ENCODE measurements at regions of chr2 and their contacts with region 1.

Region 1: DNA sequence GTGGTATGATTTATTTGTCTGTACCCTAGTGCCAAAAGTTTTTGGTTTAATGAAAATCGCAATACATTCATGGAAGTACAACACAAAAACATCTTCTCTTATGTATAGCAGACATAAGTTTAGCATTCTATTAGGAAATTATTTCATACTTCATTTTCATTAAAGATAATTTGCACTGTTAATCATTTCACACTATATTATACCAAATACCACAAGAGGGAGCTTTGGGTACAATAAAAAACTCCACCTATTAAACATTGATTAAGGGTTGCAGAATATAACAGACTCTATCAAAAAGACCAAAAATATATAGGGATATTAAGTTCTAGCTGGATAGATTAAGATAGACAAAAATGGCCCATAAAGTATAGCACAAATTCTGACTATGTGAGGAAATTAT is 79.0 kb downstream of the SLC66A3 start:
- DNase-seq: peak; percentile 46
- H3K4me3 ChIP-seq: no peak overlapping the region
- H3K27ac ChIP-seq: no peak overlapping the region
- H3K4me1 ChIP-seq: no peaks in the 10 kb centered on the region
- H3K27me3 ChIP-seq: no peaks in the 10 kb centered on the region
- CTCF ChIP-seq: peak; percentile 17 to 21
- POLR2A ChIP-seq: no peak

Region 2: GRCh38 chr2:10434886-10435819 is 799.2 kb before region 1 on chr2:
- CTCF ChIA-PET with region 1: no interaction called
- POLR2A ChIA-PET with region 1: no interaction called
- dilution Hi-C with region 1: no loop called
- intact Hi-C with region 1: no loop called
- DNase-seq: peak; percentile 74
- H3K4me3 ChIP-seq: no peak overlapping the region
- H3K27ac ChIP-seq: no peak overlapping the region
- H3K4me1 ChIP-seq: no peaks in the 10 kb centered on the region
- H3K27me3 ChIP-seq: no peaks in the 10 kb centered on the region
- CTCF ChIP-seq: peak; percentile 96
- POLR2A ChIP-seq: no peak

Region 3: GRCh38 chr2:11071211-11071865 is 163.0 kb before region 1 on chr2:
- CTCF ChIA-PET with region 1: no interaction called
- POLR2A ChIA-PET with region 1: no interaction called
- dilution Hi-C with region 1: no loop called
- intact Hi-C with region 1: no loop called
- DNase-seq: no peak
- H3K4me3 ChIP-seq: no peak overlapping the region
- H3K27ac ChIP-seq: no peak overlapping the region
- H3K4me1 ChIP-seq: peaks cover 17% of the 10 kb centered on the region
- H3K27me3 ChIP-seq: no peaks in the 10 kb centered on the region
- CTCF ChIP-seq: no peak
- POLR2A ChIP-seq: no peak

Region 4: DNA sequence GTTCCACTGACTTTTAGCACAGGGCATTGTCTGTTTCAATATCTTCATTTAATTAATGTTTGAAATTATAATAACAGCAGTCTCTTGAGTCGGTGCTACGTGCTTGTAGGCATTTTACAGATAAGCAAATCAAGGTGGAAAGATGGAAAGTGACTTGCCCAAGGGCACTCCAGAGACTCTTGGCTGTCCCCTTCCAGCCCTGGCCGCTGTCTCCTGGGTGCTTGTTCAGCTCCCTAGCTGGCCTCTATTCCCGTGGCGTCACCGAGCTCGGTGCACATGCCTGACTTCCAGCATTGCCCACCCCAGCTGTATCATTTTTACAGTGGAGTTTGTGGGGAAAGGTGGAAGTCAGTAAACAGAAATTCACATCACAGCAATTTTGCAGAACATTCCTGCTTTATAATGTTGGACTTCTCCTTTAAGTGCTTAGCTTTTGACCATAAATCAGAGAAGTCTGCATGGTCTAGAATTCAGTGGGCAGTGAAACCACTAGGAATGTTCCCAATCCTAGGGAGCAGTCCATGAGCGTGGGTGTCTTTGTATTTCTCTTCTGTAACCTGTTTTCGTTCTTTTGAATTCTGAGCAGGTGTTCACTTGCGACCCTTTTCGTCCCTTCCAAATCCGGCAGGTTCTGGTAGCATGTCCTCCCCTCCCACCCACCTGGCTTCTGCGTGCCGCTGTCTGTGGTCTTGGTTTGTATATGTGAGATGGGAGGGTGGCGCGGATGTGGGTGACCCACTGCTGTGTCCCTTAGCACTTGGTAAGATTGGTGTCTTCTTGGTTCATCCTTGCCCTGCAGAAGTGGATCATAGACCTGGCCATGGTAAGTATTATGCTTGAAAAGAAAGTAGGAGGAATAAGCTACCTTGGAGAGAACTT is 70.6 kb before region 1 on chr2:
- CTCF ChIA-PET with region 1: no interaction called
- POLR2A ChIA-PET with region 1: no interaction called
- dilution Hi-C with region 1: no loop called
- intact Hi-C with region 1: no loop called
- DNase-seq: no peak
- H3K4me3 ChIP-seq: no peak overlapping the region
- H3K27ac ChIP-seq: no peak overlapping the region
- H3K4me1 ChIP-seq: no peaks in the 10 kb centered on the region
- H3K27me3 ChIP-seq: no peaks in the 10 kb centered on the region
- CTCF ChIP-seq: no peak
- POLR2A ChIP-seq: no peak

Region 5: GRCh38 chr2:11320698-11321492 is 86.6 kb after region 1 on chr2:
- CTCF ChIA-PET with region 1: interaction called, 15 read pairs
- POLR2A ChIA-PET with region 1: no interaction called
- dilution Hi-C with region 1: no loop called
- intact Hi-C with region 1: no loop called
- DNase-seq: no peak
- H3K4me3 ChIP-seq: no peak overlapping the region
- H3K27ac ChIP-seq: no peak overlapping the region
- H3K4me1 ChIP-seq: peaks cover 3% of the 10 kb centered on the region
- H3K27me3 ChIP-seq: no peaks in the 10 kb centered on the region
- CTCF ChIP-seq: no peak
- POLR2A ChIP-seq: no peak

Region 6: DNA sequence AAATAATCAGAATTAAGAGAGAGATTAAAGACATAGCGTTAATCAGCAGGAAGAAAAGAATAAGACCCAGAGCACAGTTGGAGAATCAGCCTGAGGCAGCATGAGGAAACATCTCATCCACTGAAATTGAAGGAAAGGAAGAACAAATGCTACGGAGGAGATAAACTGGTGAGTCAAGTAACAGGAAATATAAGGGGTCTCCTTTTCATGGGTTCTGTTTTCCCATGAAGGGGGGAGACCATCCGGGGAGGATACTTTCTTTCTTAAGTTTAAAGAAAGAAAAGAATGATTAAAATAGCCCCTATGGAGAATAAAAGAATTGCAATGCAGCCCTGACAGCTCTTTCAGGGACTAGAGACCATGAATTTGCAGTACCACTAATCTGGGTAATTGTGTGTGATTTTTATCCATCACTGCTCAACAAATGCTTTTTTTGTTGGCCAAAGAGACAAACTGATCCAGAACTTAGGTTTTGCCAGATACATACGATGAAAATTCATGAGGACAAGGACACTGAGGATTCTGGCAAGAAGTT is 92.4 kb after region 1 on chr2:
- CTCF ChIA-PET with region 1: interaction called, 12 read pairs
- POLR2A ChIA-PET with region 1: no interaction called
- dilution Hi-C with region 1: no loop called
- intact Hi-C with region 1: no loop called
- DNase-seq: peak; percentile 70
- H3K4me3 ChIP-seq: peak overlapping the region in 2 of 3 experiments; percentile 5 to 30
- H3K27ac ChIP-seq: no peak overlapping the region
- H3K4me1 ChIP-seq: peaks cover 18% of the 10 kb centered on the region
- H3K27me3 ChIP-seq: no peaks in the 10 kb centered on the region
- CTCF ChIP-seq: no peak
- POLR2A ChIP-seq: no peak

Region 7: GRCh38 chr2:11368059-11368572 is 133.8 kb after region 1 on chr2:
- CTCF ChIA-PET with region 1: interaction called, 10 read pairs
- POLR2A ChIA-PET with region 1: no interaction called
- dilution Hi-C with region 1: no loop called
- intact Hi-C with region 1: no loop called
- DNase-seq: peak; percentile 65
- H3K4me3 ChIP-seq: peak overlapping the region in 1 of 3 experiments; percentile 32
- H3K27ac ChIP-seq: peak overlapping the region; percentile 16
- H3K4me1 ChIP-seq: peaks cover 16% of the 10 kb centered on the region
- H3K27me3 ChIP-seq: no peaks in the 10 kb centered on the region
- CTCF ChIP-seq: no peak
- POLR2A ChIP-seq: no peak

Region 8: GRCh38 chr2:11377928-11378545 is 143.7 kb after region 1 on chr2:
- CTCF ChIA-PET with region 1: interaction called, 19 read pairs
- POLR2A ChIA-PET with region 1: no interaction called
- dilution Hi-C with region 1: no loop called
- intact Hi-C with region 1: no loop called
- DNase-seq: no peak
- H3K4me3 ChIP-seq: no peak overlapping the region
- H3K27ac ChIP-seq: no peak overlapping the region
- H3K4me1 ChIP-seq: peaks cover 15% of the 10 kb centered on the region
- H3K27me3 ChIP-seq: no peaks in the 10 kb centered on the region
- CTCF ChIP-seq: no peak
- POLR2A ChIP-seq: no peak

Region 9: DNA sequence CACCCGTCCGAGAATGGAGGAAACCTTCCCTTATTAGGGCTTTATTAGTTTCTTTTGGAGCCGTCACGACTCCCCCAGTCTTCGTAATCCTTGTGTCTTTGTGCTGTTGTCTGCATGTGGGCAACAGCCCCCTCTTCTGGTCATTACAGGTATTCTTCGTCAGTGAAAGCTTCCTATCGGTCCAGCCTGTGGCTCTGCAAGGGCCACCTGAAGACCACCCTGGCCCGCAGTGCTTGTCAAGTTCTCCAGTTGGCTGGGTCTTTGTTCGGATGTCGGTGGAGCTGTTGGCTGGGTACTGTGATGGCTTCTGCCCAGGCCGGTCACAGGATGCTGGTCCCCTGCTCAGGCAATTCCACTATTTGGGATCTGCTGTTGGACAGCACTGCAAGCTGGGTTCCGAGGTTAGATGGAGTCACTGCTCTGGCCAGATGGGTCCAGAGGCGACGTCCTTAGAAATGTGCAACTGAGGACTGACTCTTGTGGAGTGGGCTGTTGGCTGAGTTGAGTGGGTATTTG is 212.5 kb after region 1 on chr2:
- CTCF ChIA-PET with region 1: interaction called, 70 read pairs
- POLR2A ChIA-PET with region 1: no interaction called
- dilution Hi-C with region 1: no loop called
- intact Hi-C with region 1: loop called (anchors 1 kb)
- DNase-seq: peak; percentile 71
- H3K4me3 ChIP-seq: no peak overlapping the region
- H3K27ac ChIP-seq: no peak overlapping the region
- H3K4me1 ChIP-seq: no peaks in the 10 kb centered on the region
- H3K27me3 ChIP-seq: no peaks in the 10 kb centered on the region
- CTCF ChIP-seq: peak; percentile 72 to 75
- POLR2A ChIP-seq: no peak

Region 10: GRCh38 chr2:11796190-11797171 is 562.2 kb after region 1 on chr2:
- CTCF ChIA-PET with region 1: no interaction called
- POLR2A ChIA-PET with region 1: no interaction called
- dilution Hi-C with region 1: no loop called
- intact Hi-C with region 1: no loop called
- DNase-seq: no peak
- H3K4me3 ChIP-seq: no peak overlapping the region
- H3K27ac ChIP-seq: no peak overlapping the region
- H3K4me1 ChIP-seq: no peaks in the 10 kb centered on the region
- H3K27me3 ChIP-seq: no peaks in the 10 kb centered on the region
- CTCF ChIP-seq: no peak
- POLR2A ChIP-seq: no peak

Measured in endothelial cell of umbilical vein (primary cell).